ENCODE measurements at regions of chr22 and their contacts with region 1.

Region 1: DNA sequence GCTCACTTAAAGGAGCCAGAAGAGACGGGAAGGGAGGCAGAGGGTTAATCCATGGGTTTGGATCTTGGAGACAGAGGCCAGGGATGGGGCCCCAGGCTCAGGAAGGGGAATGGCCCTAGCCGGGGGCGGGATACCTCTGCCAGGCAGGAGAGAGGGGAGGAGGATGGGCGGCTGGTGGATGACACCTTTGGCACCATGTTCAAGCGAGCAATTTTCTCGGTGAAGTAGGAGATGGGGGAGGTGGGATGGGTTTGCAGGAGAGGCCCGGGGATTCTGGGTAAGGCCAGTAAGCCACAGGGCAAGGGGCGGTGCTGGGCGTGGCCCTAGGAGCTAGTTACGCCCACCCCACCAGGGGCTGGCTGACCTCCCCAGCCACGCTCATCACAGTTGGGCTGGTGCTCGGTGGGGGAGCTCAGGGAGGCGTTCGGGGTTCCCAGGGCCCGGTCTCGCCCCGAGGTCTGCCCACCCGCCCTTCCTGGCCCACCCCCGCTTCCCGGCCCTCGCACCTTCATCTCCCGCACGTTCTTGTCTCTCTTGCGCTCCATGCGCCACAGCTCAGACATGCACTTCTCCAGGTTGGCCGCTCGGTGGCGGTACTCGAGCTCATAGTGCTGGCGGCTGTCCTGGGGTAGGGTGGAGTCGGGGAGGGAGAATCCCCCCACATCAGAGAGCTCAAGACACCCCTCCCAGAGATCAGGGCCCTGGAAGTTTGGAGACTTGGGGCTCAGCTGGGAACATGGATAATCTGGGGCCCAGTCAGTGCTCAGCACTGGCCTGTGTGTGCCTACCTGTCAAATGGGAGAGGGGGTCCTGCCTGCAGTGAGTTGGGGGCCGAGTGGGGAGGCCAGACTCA is 12.7 kb downstream of the BAIAP2L2 start:
- DNase-seq: peak; percentile 15
- ATAC-seq: peak; percentile 91
- H3K4me3 ChIP-seq: no peak overlapping the region
- H3K27ac ChIP-seq: no peak overlapping the region
- H3K4me1 ChIP-seq: peaks cover 3 to 11% of the 10 kb centered on the region in 2 experiments; a peak in 2 of 4 replicates
- H3K27me3 ChIP-seq: no peaks in the 10 kb centered on the region
- CTCF ChIP-seq: peak; percentile 47 to 78 (median 68); a peak in 5 of 6 replicates
- POLR2A ChIP-seq: no peak
- RAD21 ChIP-seq: peak; percentile 65

Region 2: GRCh38 chr22:37804881-37805813 is 292.6 kb before region 1 on chr22:
- CTCF ChIA-PET with region 1: no interaction called
- POLR2A ChIA-PET with region 1: no interaction called
- RAD21 ChIA-PET with region 1: no interaction called
- intact Hi-C with region 1: no loop called
- DNase-seq: peak; percentile 67
- ATAC-seq: peak; percentile 35
- H3K4me3 ChIP-seq: peak overlapping the region; percentile 80 to 95
- H3K27ac ChIP-seq: peak overlapping the region; percentile 87
- H3K4me1 ChIP-seq: peaks cover 18 to 69% of the 10 kb centered on the region in 2 experiments; a peak in 3 of 4 replicates
- H3K27me3 ChIP-seq: no peaks in the 10 kb centered on the region
- CTCF ChIP-seq: no peak
- POLR2A ChIP-seq: peak; percentile 94
- RAD21 ChIP-seq: no peak

Region 3: DNA sequence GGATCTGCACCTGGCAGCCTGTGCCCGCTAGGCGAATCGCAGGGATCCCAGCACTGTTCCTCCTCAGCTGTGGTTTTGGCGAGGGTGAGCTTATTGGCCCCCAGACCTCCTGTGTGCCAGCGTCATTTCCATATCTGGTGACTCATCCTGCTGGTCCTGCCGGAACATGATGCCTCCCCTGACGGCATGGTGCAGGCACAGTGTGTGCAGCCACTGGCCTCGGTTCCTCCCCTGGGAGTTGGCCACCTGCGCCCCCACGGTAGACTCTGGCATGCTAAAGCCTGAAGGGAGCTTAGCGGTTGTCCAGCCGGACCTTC is 97.9 kb before region 1 on chr22:
- CTCF ChIA-PET with region 1: no interaction called
- POLR2A ChIA-PET with region 1: no interaction called
- RAD21 ChIA-PET with region 1: no interaction called
- intact Hi-C with region 1: no loop called
- DNase-seq: peak; percentile 75
- ATAC-seq: peak; percentile 92
- H3K4me3 ChIP-seq: peak overlapping the region in 1 of 2 experiments; percentile 9; a peak in 2 of 4 replicates
- H3K27ac ChIP-seq: peak overlapping the region; percentile 50
- H3K4me1 ChIP-seq: peaks cover 20 to 43% of the 10 kb centered on the region in 2 experiments
- H3K27me3 ChIP-seq: no peaks in the 10 kb centered on the region
- CTCF ChIP-seq: peak in 1 of 3 experiments; percentile 15; a peak in 1 of 6 replicates
- POLR2A ChIP-seq: peak; percentile 10
- RAD21 ChIP-seq: no peak

Region 4: GRCh38 chr22:38109371-38110001 is 11.7 kb after region 1 on chr22:
- CTCF ChIA-PET with region 1: interaction called, 11 read pairs
- POLR2A ChIA-PET with region 1: no interaction called
- RAD21 ChIA-PET with region 1: no interaction called
- intact Hi-C with region 1: no loop called
- DNase-seq: no peak
- ATAC-seq: no peak
- H3K4me3 ChIP-seq: no peak overlapping the region
- H3K27ac ChIP-seq: no peak overlapping the region
- H3K4me1 ChIP-seq: peaks cover 14 to 21% of the 10 kb centered on the region in 2 experiments
- H3K27me3 ChIP-seq: no peaks in the 10 kb centered on the region
- CTCF ChIP-seq: no peak
- POLR2A ChIP-seq: no peak
- RAD21 ChIP-seq: no peak

Region 5: DNA sequence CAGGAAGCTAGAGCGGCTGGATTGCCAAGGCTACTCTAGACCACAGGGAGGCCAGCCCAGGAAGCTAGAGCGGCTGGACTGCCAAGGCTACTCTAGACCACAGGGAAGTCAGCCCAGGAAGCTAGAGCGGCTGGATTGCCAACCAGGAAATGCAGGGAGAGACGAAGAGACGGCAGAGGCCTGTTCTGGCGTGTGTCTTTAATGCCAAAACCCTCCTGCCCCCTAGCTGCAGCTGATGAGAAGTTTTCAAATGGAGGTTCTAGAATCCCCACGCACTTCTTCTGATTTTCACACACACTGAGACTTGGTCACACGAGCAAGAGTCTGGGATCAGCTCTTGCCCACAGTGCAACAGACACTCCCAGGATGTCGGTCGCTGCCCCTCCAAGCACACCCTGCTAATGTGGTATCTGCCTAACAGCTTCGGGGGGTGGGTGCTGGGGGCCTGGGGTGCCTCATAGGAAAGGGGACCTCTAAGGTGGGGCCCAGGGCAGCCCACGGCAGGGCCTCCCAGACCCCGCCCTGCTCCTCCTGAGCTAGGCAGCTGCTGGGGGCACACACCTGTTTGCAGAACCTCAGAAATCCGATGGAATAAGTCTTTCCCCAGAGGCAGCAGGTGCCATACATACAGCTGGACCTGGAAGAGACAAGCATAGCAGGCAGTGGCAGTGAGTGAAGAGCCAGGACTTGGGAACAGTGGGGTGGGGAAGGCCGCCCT is 132.5 kb after region 1 on chr22:
- CTCF ChIA-PET with region 1: interaction called, 10 read pairs
- POLR2A ChIA-PET with region 1: no interaction called
- RAD21 ChIA-PET with region 1: interaction called, 3 to 4 read pairs
- intact Hi-C with region 1: no loop called
- DNase-seq: no peak
- ATAC-seq: peak; percentile 35
- H3K4me3 ChIP-seq: no peak overlapping the region
- H3K27ac ChIP-seq: peak overlapping the region; percentile 60
- H3K4me1 ChIP-seq: peaks cover 22 to 28% of the 10 kb centered on the region in 2 experiments
- H3K27me3 ChIP-seq: no peaks in the 10 kb centered on the region
- CTCF ChIP-seq: peak; percentile 52 to 59 (median 54); a peak in 5 of 6 replicates
- POLR2A ChIP-seq: no peak
- RAD21 ChIP-seq: peak; percentile 76

Region 6: GRCh38 chr22:38291201-38291777 is 193.5 kb after region 1 on chr22:
- CTCF ChIA-PET with region 1: no interaction called
- POLR2A ChIA-PET with region 1: no interaction called
- RAD21 ChIA-PET with region 1: no interaction called
- intact Hi-C with region 1: no loop called
- DNase-seq: no peak
- ATAC-seq: no peak
- H3K4me3 ChIP-seq: no peak overlapping the region
- H3K27ac ChIP-seq: no peak overlapping the region
- H3K4me1 ChIP-seq: no peaks in the 10 kb centered on the region
- H3K27me3 ChIP-seq: no peaks in the 10 kb centered on the region
- CTCF ChIP-seq: no peak
- POLR2A ChIP-seq: no peak
- RAD21 ChIP-seq: no peak